ENCODE measurements at regions of chr10 and their contacts with region 1.

Region 1: DNA sequence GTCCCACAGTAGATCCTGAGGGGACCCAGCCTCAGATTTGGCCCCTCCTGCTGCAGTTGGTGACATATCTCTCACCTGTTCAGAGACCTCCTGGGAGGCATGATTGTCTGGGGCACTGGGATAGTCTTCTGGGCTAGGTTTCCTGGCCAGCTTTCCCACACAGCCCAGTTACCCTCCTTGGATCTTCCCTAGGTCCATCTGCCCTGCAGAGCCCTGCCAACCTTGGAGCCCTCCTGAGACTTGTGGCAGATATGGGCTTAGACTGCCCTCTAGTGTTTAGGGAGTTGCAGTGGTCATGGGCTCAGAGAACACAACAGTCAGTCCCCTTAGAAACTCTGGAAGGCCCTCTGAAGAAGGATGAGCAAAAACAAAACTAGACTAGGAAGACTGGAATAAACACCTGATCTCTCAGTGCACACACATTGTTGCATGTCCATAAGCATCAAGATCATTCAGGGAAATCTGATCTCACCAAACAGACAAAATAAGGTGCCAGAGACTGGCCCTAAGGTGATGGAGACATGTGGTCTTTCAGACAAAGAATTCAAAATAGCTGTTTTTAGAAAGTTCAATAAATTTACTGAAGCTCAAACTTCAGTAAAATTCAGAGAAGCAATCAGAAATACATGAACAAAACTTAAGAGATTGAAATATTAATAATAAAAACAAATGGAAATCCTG is 324.6 kb downstream of the ATRNL1 start:
- DNase-seq: peak; percentile 4
- H3K4me3 Mint-ChIP-seq: no peak overlapping the region
- H3K27ac Mint-ChIP-seq: no peak overlapping the region
- H3K4me1 Mint-ChIP-seq: no peaks in the 10 kb centered on the region
- H3K27me3 Mint-ChIP-seq: no peaks in the 10 kb centered on the region

Region 2: GRCh38 chr10:115171392-115171960 is 246.2 kb before region 1 on chr10:
- CTCF ChIA-PET with region 1: no interaction called
- intact Hi-C with region 1: loop called (anchors 10 kb)
- DNase-seq: no peak
- H3K4me3 Mint-ChIP-seq: no peak overlapping the region
- H3K27ac Mint-ChIP-seq: no peak overlapping the region
- H3K4me1 Mint-ChIP-seq: no peaks in the 10 kb centered on the region
- H3K27me3 Mint-ChIP-seq: no peaks in the 10 kb centered on the region

Region 3: DNA sequence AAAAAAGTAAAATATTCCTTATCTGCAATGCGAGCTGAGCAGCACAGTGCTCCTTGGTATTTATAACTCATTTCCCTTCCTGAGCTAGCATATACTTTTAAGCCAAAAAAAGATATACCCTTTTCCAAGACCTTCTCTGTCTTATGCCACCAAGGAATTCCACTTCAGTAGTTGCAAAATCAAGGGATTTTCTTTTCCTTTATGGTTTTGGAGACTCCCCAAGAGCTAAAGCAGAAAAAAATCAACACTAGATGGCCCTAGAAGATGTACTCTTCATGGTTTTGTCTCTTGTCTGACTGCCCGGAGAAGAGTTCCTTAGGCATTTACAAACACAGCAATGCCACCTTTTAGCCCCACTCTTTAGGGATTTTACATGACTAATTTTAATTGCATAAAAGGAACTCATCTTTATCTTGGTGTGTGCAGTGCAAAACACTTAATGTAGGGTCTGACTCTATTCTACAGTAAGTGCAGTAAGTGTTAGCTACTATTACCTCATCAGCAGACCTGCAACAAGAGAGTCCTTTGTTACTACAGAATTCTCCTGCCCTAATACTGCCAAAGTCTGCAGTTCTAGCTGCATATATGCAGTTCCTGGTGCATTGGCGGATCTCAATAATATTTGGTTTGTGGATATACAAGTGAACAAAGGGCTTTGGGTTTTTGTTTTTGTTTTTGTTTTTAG is 411.9 kb after region 1 on chr10:
- CTCF ChIA-PET with region 1: no interaction called
- intact Hi-C with region 1: no loop called
- DNase-seq: no peak
- H3K4me3 Mint-ChIP-seq: no peak overlapping the region
- H3K27ac Mint-ChIP-seq: no peak overlapping the region
- H3K4me1 Mint-ChIP-seq: no peaks in the 10 kb centered on the region
- H3K27me3 Mint-ChIP-seq: no peaks in the 10 kb centered on the region

Measured in activated naive CD4-positive, alpha-beta T cell treated with anti-CD3 and anti-CD28 coated beads for 36 hours (primary cell).